ENCODE measurements at regions of chr5 and their contacts with region 1.

Region 1: DNA sequence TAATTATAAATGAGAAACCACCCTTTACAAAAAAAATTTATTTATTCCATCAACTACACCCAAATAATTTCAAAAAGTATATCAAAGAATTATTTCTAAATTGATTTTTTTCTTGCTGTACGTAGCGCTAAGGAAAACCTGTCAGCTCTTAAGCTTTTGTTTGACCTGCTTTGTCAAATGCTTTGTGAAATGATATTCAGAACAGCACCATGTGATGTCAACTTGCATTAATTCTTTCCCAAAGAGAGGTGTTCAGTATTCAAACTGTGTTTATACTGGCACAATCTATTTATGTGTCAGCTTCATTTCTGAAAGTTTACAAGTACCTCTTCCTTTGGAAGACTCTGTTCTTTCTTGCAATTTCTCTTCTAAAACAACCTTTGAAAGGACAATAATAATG is 12.0 kb upstream of the ARSB start:
- DNase-seq: no peak
- H3K4me3 Mint-ChIP-seq: no peak overlapping the region
- H3K27ac Mint-ChIP-seq: no peak overlapping the region
- H3K4me1 Mint-ChIP-seq: peaks cover 9% of the 10 kb centered on the region
- H3K27me3 Mint-ChIP-seq: no peaks in the 10 kb centered on the region
- CTCF ChIP-seq: no peak

Region 2: DNA sequence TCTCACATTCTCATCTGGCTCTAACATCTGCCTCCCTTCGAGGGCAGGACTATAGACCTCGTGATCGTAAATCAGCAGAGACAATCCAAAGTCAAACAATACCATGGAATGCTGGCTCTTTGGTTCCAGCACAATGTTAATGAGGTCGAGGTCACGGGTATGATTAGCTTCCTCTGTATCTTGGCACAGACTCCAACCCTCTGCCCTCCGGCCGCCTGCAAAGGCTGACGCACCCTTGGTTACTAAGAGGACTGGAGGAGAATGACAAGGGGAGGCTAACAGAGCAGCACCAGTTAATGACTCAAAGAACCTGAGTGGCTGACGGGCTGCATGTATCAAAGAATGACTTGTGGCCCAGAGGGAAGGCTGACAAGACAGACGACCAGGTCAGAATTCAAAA is 358.7 kb before region 1 on chr5:
- CTCF ChIA-PET with region 1: no interaction called
- POLR2A ChIA-PET with region 1: no interaction called
- intact Hi-C with region 1: no loop called
- DNase-seq: peak; percentile 98
- H3K4me3 Mint-ChIP-seq: peak overlapping the region; percentile 38
- H3K27ac Mint-ChIP-seq: peak overlapping the region; percentile 89
- H3K4me1 Mint-ChIP-seq: peaks cover 43% of the 10 kb centered on the region
- H3K27me3 Mint-ChIP-seq: no peaks in the 10 kb centered on the region
- CTCF ChIP-seq: no peak

Region 3: DNA sequence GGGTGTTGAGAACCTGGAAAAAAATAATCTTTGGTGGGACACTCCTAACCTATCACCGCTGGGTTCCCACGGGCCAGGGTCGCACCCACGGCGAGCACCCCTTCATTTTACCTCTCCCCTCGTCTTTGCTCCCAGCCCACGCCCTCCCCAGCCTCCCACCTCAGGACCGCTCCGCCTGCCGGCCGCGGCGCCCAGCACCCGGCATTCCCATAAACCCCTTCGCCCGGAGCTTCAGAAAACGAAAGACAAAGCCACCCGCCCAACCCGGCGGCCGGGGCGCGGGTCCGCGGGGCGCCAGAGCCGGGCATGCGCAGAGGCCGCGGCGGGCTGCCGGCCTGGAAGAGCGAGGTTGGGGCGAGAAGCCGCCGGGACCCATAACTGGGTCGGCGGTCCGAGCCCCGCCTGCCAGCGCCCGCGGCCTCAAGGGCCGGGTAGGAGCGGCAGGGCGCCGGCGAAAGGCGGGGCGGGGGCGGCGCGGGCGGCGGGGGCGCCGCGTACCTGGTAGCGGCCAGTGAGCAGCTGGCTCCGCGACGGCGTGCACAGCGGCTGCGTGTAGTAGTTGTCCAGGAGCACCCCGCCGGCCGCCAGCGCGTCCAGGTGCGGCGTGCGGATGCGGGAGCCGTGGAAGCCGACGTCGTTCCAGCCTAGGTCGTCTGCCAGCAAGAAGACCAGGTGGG is 12.5 kb before region 1 on chr5:
- CTCF ChIA-PET with region 1: interaction called, 5 read pairs
- POLR2A ChIA-PET with region 1: interaction called, 10 read pairs
- intact Hi-C with region 1: no loop called
- DNase-seq: peak; percentile 85
- H3K4me3 Mint-ChIP-seq: peak overlapping the region; percentile 83
- H3K27ac Mint-ChIP-seq: peak overlapping the region; percentile 42
- H3K4me1 Mint-ChIP-seq: peaks cover 7% of the 10 kb centered on the region
- H3K27me3 Mint-ChIP-seq: no peaks in the 10 kb centered on the region
- CTCF ChIP-seq: peak; percentile 25

Region 4: GRCh38 chr5:79284846-79285245 is 287.8 kb after region 1 on chr5:
- CTCF ChIA-PET with region 1: no interaction called
- POLR2A ChIA-PET with region 1: no interaction called
- intact Hi-C with region 1: no loop called
- DNase-seq: no peak
- H3K4me3 Mint-ChIP-seq: no peak overlapping the region
- H3K27ac Mint-ChIP-seq: no peak overlapping the region
- H3K4me1 Mint-ChIP-seq: no peaks in the 10 kb centered on the region
- H3K27me3 Mint-ChIP-seq: no peaks in the 10 kb centered on the region
- CTCF ChIP-seq: no peak